Dorsolateral prefrontal cortex (tissue), 120 donors: ENCODE measurements at regions of chr14 and their contacts with region 1.

Region 1: DNA sequence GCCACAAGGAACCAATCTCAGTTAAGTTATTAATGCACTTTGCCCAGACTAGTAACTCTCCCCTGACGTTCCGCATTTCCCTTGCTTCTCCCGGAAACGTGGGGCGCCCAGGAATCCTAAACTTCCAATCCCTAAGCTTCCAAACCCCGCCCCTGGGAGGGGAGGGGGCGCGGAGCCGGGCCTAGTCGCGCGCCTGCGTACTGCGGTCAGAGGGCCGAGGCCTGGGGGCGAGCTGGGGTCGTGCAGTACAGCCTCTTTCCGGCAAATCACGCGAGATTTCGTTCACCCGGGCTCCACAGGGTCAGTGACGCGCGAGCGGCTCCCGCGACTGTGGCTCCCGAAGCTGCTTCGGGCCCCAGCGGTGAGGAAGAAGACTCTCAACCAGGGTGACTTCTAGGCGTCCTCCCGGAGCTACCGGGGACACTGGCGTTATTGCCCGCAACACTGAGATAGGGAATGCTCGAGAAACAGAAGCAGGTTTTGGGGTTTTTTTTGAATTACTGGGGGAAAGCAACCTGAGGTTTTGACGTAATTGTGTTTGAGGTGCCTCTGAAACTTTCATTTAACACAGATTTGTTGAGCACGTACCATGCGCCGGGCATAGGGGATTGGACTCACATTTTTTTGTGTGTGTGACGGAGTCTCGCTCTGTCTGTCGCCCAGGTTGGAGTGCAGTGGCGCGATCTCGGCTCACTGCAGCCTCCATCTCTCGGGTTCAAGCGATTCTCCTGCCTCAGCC is at the start of gene PTGR2:
- DNase-seq: peak; percentile 82 to 95 (median 91)
- H3K4me3 ChIP-seq: peak within 1 kb of the TSS; percentile 50 to 94 (median 77)
- H3K27ac ChIP-seq: peak within 1 kb of the TSS; percentile 78 to 99 (median 95)
- H3K27me3 ChIP-seq: no peaks in the 10 kb centered on the region
- CTCF ChIP-seq: peak in 34 of 56 donors; percentile 7 to 48 (median 24)
- total RNA-seq, gene PTGR2: 9.4 to 45.6 (median 18.8) TPM

Region 2: GRCh38 chr14:73644531-73645247 is 207.1 kb before region 1 on chr14 and contains the start of gene DNAL1:
- intact Hi-C with region 1: loop called in 1 of 2 experiments (anchors 10 kb)
- DNase-seq: peak; percentile 89 to 96 (median 92)
- H3K4me3 ChIP-seq: peak within 1 kb of the TSS; percentile 65 to 100 (median 87)
- H3K27ac ChIP-seq: peak within 1 kb of the TSS; percentile 44 to 95 (median 88)
- H3K27me3 ChIP-seq: no peaks in the 10 kb centered on the region
- CTCF ChIP-seq: peak in 40 of 56 donors; percentile 11 to 65 (median 38)
- total RNA-seq, gene DNAL1: 17.3 to 60.9 (median 39.3) TPM

Region 3: GRCh38 chr14:73886449-73887317 is 34.9 kb after region 1 on chr14 and contains the start of gene ZNF410:
- intact Hi-C with region 1: loop called in 1 of 2 experiments (anchors 5 kb)
- DNase-seq: peak; percentile 75 to 93 (median 88)
- H3K4me3 ChIP-seq: peak within 1 kb of the TSS; percentile 66 to 100 (median 91)
- H3K27ac ChIP-seq: peak within 1 kb of the TSS; percentile 52 to 98 (median 91)
- H3K27me3 ChIP-seq: no peaks in the 10 kb centered on the region
- CTCF ChIP-seq: peak in 19 of 56 donors; percentile 3 to 36 (median 11)
- total RNA-seq, gene ZNF410: 31.1 to 70.7 (median 43.5) TPM